Posterior cingulate gyrus (tissue), 11 donors: ENCODE measurements at regions of chr4 and their contacts with region 1.

Region 1: DNA sequence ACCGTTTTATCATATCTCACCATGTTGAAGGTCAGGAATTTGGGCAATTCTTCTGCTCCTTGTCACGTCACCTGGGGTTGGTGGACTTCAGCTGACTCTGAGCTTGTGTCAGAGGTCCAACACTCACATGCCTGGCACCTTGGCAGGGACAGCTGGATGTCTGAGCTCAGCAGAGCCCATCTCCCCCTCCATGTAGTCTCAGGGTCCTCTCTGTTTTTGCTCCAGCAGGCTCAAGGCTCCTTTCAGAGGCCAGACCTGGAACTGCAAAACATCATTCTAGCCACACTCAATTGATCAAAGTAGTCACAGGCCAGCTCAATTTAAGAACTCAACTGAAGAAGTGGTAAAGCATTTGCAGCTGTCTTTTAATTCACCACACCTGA is 45.4 kb downstream of the EDNRA start:
- DNase-seq: no peak

Region 2: GRCh38 chr4:147578051-147578476 is 51.8 kb after region 1 on chr4:
- intact Hi-C with region 1: loop called (anchors 5 kb)
- DNase-seq: no peak